ENCODE measurements at regions of chr9 and their contacts with region 1.

Region 1: DNA sequence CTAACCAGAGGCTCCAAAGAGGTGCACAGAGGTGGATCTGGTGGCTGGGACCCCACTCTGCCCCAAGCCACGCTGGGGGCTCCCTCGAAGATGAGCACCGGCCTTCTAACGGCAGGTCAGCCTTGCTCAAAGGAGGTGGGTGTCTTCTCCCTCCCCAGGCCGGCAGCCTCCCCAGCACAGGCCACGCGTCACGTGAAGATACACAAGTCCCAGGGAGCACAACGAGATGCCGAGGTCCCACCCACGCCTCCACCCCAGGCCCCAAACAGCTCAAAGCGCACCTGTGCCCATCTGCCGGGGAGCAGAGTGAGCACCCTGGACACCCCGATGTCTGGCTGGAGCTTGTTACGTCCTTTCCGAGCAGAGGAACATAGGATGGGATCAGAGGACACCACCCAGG is 12.1 kb downstream of the PNPLA7 start:
- DNase-seq: peak in 1 of 10 donors; percentile 27
- ATAC-seq: no peak
- H3K4me3 Mint-ChIP-seq: no peak overlapping the region
- H3K27ac Mint-ChIP-seq: peak overlapping the region in 3 of 10 donors; percentile 53 to 81 (median 80)
- H3K4me1 Mint-ChIP-seq: peaks cover 16 to 32% (median 27%) of the 10 kb centered on the region in 4 donors
- H3K27me3 Mint-ChIP-seq: no peaks in the 10 kb centered on the region

Region 2: DNA sequence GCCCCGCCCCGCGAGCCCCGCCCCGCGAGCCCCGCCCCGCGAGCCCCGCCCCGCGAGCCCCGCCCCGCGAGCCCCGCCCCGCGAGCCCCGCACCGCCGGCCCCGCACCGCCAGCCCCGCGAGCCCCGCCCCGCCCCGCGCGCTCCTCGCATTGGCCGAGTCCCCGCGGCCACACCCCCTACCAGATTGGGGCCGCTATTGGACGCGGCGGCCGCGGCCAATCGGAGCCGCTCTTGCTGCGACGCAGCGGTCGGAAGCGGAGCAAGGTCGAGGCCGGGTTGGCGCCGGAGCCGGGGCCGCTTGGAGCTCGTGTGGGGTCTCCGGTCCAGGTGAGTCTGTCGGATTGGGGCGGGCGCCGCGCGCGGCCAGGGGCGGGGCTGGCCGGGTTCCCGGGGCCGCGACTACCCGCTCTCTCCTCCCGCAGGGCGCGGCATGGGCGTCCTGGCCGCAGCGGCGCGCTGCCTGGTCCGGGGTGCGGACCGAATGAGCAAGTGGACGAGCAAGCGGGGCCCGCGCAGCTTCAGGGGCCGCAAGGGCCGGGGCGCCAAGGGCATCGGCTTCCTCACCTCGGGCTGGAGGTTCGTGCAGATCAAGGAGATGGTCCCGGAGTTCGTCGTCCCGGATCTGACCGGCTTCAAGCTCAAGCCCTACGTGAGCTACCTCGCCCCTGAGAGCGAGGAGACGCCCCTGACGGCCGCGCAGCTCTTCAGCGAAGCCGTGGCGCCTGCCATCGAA is 13.8 kb after region 1 on chr9 and contains the start of gene MRPL41:
- POLR2A ChIA-PET with region 1: interaction called, 25 read pairs
- DNase-seq: peak; percentile 75 to 95 (median 82)
- ATAC-seq: peak; percentile 84 to 85
- H3K4me3 Mint-ChIP-seq: peak within 1 kb of the TSS; percentile 77 to 96 (median 88)
- H3K27ac Mint-ChIP-seq: peak within 1 kb of the TSS in 9 of 10 donors; percentile 78 to 92 (median 86)
- H3K4me1 Mint-ChIP-seq: peaks cover 7 to 32% (median 21%) of the 10 kb centered on the region in 4 donors
- H3K27me3 Mint-ChIP-seq: no peaks in the 10 kb centered on the region
- polyA plus RNA-seq, gene MRPL41: 36.7 to 46.5 (median 43.0) TPM

Region 3: DNA sequence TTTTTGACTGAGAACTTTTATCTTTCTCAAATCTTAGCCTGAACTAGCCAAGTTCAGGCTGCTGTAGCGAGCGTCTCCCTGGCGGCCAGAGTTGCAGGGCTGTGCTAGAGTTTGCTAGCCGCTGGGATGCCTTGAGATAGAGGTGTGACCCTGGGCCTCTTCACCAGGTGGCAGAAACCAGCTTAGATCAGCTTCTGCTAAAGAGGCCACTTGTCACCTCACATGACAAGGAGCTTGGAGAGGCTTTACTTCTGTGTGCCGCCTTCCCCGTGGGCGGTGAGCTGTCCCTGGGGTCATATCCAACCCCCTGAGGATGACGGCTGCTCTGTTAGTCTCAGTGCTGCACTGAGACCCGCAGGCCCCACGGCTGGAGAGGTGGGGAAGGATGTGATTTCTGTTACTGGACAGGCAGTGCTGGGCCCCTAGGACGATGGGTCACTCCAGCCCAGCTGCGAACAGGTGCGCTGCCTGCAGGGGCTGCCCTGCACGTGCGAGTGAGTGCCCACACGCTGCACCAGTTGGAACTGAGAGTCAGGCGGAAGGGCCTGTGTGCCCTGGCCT is 144.5 kb after region 1 on chr9:
- POLR2A ChIA-PET with region 1: no interaction called
- DNase-seq: no peak
- ATAC-seq: no peak
- H3K4me3 Mint-ChIP-seq: peak overlapping the region in 1 of 10 donors; percentile 38
- H3K27ac Mint-ChIP-seq: peak overlapping the region in 4 of 10 donors; percentile 40 to 61 (median 44)
- H3K4me1 Mint-ChIP-seq: peaks cover 30 to 73% (median 59%) of the 10 kb centered on the region in 4 donors
- H3K27me3 Mint-ChIP-seq: no peaks in the 10 kb centered on the region

Measured in naive thymus-derived CD8-positive, alpha-beta T cell (primary cell).